Natural killer cell (primary cell): ENCODE measurements at regions of chr16 and their contacts with region 1.

Region 1: DNA sequence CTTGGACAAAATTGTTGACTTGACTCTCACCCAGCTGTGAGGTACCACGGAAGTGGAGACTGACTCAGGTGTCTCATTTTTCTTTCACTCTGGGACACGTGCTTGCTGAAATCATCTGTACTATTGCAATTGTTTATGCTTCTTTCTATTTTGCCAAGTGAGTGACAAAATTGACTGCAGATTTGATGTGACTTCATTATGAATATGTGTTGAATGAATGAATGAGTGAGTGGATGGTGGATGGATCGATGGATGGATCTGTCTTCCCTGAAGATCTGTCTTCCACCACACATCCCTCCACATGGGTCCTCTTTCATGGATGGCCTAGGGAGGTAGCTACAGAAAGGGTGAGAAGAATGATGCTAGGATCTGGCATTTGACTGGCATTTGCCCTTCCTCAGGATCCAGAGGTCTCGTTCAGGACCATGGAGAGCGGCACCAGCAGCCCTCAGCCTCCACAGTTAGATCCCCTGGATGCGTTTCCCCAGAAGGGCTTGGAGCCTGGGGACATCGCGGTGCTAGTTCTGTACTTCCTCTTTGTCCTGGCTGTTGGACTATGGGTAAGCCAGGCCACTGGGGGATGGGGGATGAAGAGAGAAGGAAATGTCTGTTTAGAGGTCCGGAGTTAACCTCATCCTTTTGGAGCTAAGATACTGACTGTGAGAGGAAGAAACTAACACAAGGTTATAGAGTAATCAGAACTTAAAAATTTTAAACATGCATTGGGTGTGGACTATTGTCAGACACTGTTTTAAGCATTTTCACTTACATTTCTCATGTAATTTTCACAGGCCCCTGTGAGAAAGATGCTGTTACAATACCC is 12.7 kb downstream of the SLC5A11 start:
- DNase-seq: peak; percentile 27 to 63
- ATAC-seq: peak in 2 of 3 donors; percentile 41 to 56
- H3K4me3 ChIP-seq: no peak overlapping the region
- H3K4me3 Mint-ChIP-seq: no peak overlapping the region
- H3K27ac ChIP-seq: no peak overlapping the region
- H3K27ac Mint-ChIP-seq: no peak overlapping the region
- H3K4me1 ChIP-seq: no peaks in the 10 kb centered on the region
- H3K4me1 Mint-ChIP-seq: no peaks in the 10 kb centered on the region
- H3K27me3 ChIP-seq: no peaks in the 10 kb centered on the region
- H3K27me3 Mint-ChIP-seq: peaks cover 6 to 12% of the 10 kb centered on the region in 2 donors
- CTCF ChIP-seq: no peak

Region 2: DNA sequence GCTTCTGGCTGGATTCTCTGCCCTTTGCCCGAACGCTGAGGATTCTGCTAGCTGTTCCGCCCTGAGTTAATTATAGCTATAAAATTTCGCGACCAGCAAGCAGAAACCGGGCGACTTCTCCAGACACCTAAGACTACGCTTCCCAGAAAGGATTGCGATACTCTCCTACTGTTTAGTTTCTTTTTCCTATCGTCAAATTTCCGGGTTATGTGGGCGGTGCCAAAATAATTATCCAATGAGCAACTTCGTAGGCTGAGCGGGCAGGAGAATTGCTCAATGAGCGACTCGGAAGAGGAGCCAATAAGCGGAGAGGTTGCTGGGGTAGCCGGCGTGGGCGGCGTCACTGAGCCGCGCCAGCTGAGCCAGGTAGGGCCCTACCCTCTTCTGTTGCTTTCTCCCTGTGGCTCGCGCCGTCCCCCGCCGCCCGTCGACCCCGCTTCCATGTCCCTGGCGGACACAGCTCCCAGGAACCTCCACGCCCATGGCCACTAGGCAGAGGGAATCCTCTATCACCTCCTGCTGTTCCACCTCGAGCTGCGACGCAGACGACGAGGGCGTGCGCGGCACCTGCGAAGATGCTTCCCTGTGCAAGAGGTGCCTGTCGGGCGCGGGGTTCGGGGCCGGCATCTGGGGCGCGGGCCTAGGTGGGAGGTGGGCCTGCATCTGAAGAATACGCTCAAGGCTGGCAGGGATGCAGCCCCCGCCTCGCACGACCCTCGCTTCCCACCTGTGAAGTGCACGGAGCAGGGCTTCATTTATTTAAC is 253.2 kb after region 1 on chr16 and contains the start of gene LCMT1:
- intact Hi-C with region 1: loop called (anchors 5 kb)
- DNase-seq: peak; percentile 84 to 96
- ATAC-seq: peak; percentile 88 to 94 (median 89)
- H3K4me3 ChIP-seq: peak within 1 kb of the TSS; percentile 80
- H3K4me3 Mint-ChIP-seq: peak within 1 kb of the TSS; percentile 90
- H3K27ac ChIP-seq: peak within 1 kb of the TSS; percentile 56
- H3K27ac Mint-ChIP-seq: peak within 1 kb of the TSS; percentile 86 to 88
- H3K4me1 ChIP-seq: peaks cover 33% of the 10 kb centered on the region
- H3K4me1 Mint-ChIP-seq: peaks cover 64 to 67% of the 10 kb centered on the region in 2 donors
- H3K27me3 ChIP-seq: no peaks in the 10 kb centered on the region
- H3K27me3 Mint-ChIP-seq: no peaks in the 10 kb centered on the region
- CTCF ChIP-seq: no peak
- total RNA-seq, gene LCMT1: 28.8 to 49.5 (median 43.0) TPM